ENCODE measurements at regions of chr19 and their contacts with region 1.

Region 1: GRCh38 chr19:46371371-46371901 is 24.5 kb downstream of the PPP5C start:
- DNase-seq: no peak
- CTCF ChIP-seq: no peak

Region 2: GRCh38 chr19:46355234-46356148 is 15.9 kb before region 1 on chr19:
- CTCF ChIA-PET with region 1: interaction called, 10 read pairs
- POLR2A ChIA-PET with region 1: interaction called, 5 read pairs
- DNase-seq: peak; percentile 49
- CTCF ChIP-seq: no peak

Region 3: DNA sequence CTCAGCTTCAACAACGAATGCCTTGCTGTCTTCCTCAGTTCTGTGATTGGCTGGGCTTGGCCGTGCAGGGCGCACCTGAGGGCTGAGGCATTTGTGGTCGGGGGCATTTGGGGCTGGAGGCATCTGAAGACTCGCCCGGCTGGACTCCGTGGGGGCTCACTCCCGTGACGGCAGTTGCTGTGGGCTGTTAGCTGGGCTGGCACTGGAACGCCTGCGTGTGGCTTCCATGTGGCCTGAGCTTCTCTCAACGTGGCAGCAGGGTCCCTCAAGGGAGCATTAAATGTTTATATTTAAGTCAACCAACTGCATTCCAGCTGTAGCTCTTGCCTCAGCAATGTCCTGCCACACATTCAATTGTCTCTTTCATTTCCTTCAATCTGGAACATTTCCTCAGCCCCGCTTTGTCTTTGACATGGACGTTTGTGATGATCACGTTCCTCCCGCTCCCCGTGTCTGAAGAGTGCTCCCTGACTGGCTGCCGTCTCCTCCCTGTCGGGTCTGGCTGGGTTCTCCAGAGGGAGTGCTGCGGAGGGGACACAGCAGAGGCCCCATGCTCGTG is 20.9 kb after region 1 on chr19:
- CTCF ChIA-PET with region 1: interaction called, 14 read pairs
- POLR2A ChIA-PET with region 1: no interaction called
- DNase-seq: no peak
- CTCF ChIP-seq: no peak